Heart right ventricle (tissue), 16 donors: ENCODE measurements at regions of chr1 and their contacts with region 1.

Region 1: DNA sequence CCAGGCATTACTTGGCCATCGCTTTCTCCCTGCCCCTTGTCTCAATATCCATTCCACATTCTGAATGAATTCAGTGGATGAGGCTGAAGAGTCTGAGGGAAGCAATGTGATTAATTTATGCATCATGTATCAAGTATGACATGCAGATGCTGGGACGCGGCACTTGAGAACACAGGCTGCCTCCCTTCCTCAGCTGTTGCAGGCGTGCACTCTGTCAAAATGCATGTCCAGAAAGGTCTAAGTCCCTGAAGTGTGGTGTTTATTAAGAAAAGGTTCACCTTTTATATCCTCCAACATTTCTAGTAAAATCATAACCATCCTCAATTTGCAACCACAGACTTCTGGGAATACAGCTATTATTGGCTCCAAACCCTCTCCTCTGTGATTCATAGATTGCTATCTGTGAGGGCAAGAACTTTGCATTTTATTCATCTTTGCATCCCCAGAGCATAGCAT is 22.6 kb upstream of the RAB3GAP2 start:
- DNase-seq: no peak
- ATAC-seq: no peak
- H3K4me3 ChIP-seq: no peak overlapping the region
- H3K27ac ChIP-seq: no peak overlapping the region
- H3K4me1 ChIP-seq: peaks cover 0 to 6% (median under 1%) of the 10 kb centered on the region in 9 donors
- H3K27me3 ChIP-seq: peaks cover 0 to 17% (median 0%) of the 10 kb centered on the region in 7 donors
- CTCF ChIP-seq: no peak

Region 2: GRCh38 chr1:219699870-219700269 is 595.0 kb before region 1 on chr1:
- intact Hi-C with region 1: no loop called
- DNase-seq: no peak
- ATAC-seq: peak in 6 of 8 donors; percentile 45 to 73 (median 50)
- H3K4me3 ChIP-seq: no peak overlapping the region
- H3K27ac ChIP-seq: no peak overlapping the region
- H3K4me1 ChIP-seq: peaks cover 0 to 14% (median 0%) of the 10 kb centered on the region in 9 donors
- H3K27me3 ChIP-seq: no peaks in the 10 kb centered on the region
- CTCF ChIP-seq: no peak

Region 3: DNA sequence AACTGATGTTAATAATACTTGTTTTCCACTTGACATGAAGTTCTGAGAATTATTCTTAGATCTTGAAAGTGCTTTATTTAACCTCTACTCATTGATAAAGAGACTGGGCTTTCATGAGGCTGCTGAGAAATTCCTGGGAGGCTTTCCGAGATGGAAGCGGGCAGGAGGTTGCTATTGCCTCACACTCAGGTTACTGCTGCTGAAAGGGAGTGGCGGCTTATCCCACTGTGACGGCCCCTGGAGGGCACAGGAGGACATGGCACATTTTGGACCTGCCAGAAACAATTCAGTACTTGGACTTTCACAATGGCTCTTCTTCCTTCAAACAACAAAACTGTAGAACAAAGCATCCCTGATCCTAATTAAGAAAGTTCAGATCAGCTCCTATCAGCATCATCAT is 216.9 kb after region 1 on chr1:
- intact Hi-C with region 1: loop called in 2 of 10 experiments (anchors 10 kb)
- DNase-seq: peak in 1 of 2 donors; percentile 10
- ATAC-seq: peak in 4 of 8 donors; percentile 37 to 85 (median 64)
- H3K4me3 ChIP-seq: no peak overlapping the region
- H3K27ac ChIP-seq: no peak overlapping the region
- H3K4me1 ChIP-seq: peaks cover 0 to 4% (median 0%) of the 10 kb centered on the region in 9 donors
- H3K27me3 ChIP-seq: peaks cover 0 to 4% (median 0%) of the 10 kb centered on the region in 7 donors
- CTCF ChIP-seq: peak in 7 of 9 donors; percentile 13 to 44 (median 30)

Region 4: GRCh38 chr1:220527908-220528678 is 233.2 kb after region 1 on chr1 and contains the start of gene MARK1:
- intact Hi-C with region 1: loop called in 4 of 10 experiments (anchors 5 to 10 kb)
- DNase-seq: peak; percentile 82 to 83
- ATAC-seq: peak; percentile 91 to 94 (median 93)
- H3K4me3 ChIP-seq: peak within 1 kb of the TSS; percentile 71 to 95 (median 84)
- H3K27ac ChIP-seq: peak within 1 kb of the TSS; percentile 84 to 95 (median 93)
- H3K4me1 ChIP-seq: peaks cover 0 to 29% (median 11%) of the 10 kb centered on the region in 9 donors
- H3K27me3 ChIP-seq: peaks cover 0 to 67% (median 5%) of the 10 kb centered on the region in 7 donors
- CTCF ChIP-seq: no peak
- total RNA-seq, gene MARK1: 11.3 to 19.0 (median 15.5) TPM